ENCODE measurements at regions of chr14 and their contacts with region 1.

Region 1: GRCh38 chr14:74249433-74250375 is 10.5 kb downstream of the VSX2 start:
- DNase-seq: no peak
- ATAC-seq: no peak
- H3K4me3 ChIP-seq: no peak overlapping the region
- H3K4me3 Mint-ChIP-seq: no peak overlapping the region
- H3K27ac ChIP-seq: no peak overlapping the region
- H3K27ac Mint-ChIP-seq: no peak overlapping the region
- H3K4me1 ChIP-seq: peaks cover 9% of the 10 kb centered on the region
- H3K4me1 Mint-ChIP-seq: peaks cover 9% of the 10 kb centered on the region
- H3K27me3 ChIP-seq: peaks cover 26 to 39% of the 10 kb centered on the region in 2 experiments
- H3K27me3 Mint-ChIP-seq: peaks cover 57% of the 10 kb centered on the region
- CTCF ChIP-seq: no peak

Region 2: GRCh38 chr14:73452341-73453186 is 797.1 kb before region 1 on chr14:
- CTCF ChIA-PET with region 1: no interaction called
- POLR2A ChIA-PET with region 1: no interaction called
- intact Hi-C with region 1: no loop called
- DNase-seq: no peak
- ATAC-seq: no peak
- H3K4me3 ChIP-seq: no peak overlapping the region
- H3K4me3 Mint-ChIP-seq: peak overlapping the region; percentile 7
- H3K27ac ChIP-seq: no peak overlapping the region
- H3K27ac Mint-ChIP-seq: no peak overlapping the region
- H3K4me1 ChIP-seq: peaks cover 22% of the 10 kb centered on the region
- H3K4me1 Mint-ChIP-seq: peaks cover 42% of the 10 kb centered on the region
- H3K27me3 ChIP-seq: no peaks in the 10 kb centered on the region
- H3K27me3 Mint-ChIP-seq: no peaks in the 10 kb centered on the region
- CTCF ChIP-seq: no peak

Region 3: GRCh38 chr14:74109369-74109768 is 140.3 kb before region 1 on chr14:
- CTCF ChIA-PET with region 1: no interaction called
- POLR2A ChIA-PET with region 1: no interaction called
- intact Hi-C with region 1: loop called (anchors 1 kb)
- DNase-seq: no peak
- ATAC-seq: no peak
- H3K4me3 ChIP-seq: no peak overlapping the region
- H3K4me3 Mint-ChIP-seq: no peak overlapping the region
- H3K27ac ChIP-seq: no peak overlapping the region
- H3K27ac Mint-ChIP-seq: no peak overlapping the region
- H3K4me1 ChIP-seq: no peaks in the 10 kb centered on the region
- H3K4me1 Mint-ChIP-seq: no peaks in the 10 kb centered on the region
- H3K27me3 ChIP-seq: no peaks in the 10 kb centered on the region
- H3K27me3 Mint-ChIP-seq: no peaks in the 10 kb centered on the region
- CTCF ChIP-seq: no peak

Region 4: GRCh38 chr14:74217672-74218448 is 31.8 kb before region 1 on chr14:
- CTCF ChIA-PET with region 1: no interaction called
- POLR2A ChIA-PET with region 1: no interaction called
- intact Hi-C with region 1: loop called (anchors 1 to 2 kb)
- DNase-seq: peak; percentile 48 to 82 (median 68)
- ATAC-seq: peak; percentile 92
- H3K4me3 ChIP-seq: peak overlapping the region; percentile 22
- H3K4me3 Mint-ChIP-seq: peak overlapping the region; percentile 30
- H3K27ac ChIP-seq: no peak overlapping the region
- H3K27ac Mint-ChIP-seq: no peak overlapping the region
- H3K4me1 ChIP-seq: peaks cover 9% of the 10 kb centered on the region
- H3K4me1 Mint-ChIP-seq: no peaks in the 10 kb centered on the region
- H3K27me3 ChIP-seq: peaks cover 11 to 28% of the 10 kb centered on the region in 2 experiments
- H3K27me3 Mint-ChIP-seq: peaks cover 41% of the 10 kb centered on the region
- CTCF ChIP-seq: peak; percentile 77

Region 5: DNA sequence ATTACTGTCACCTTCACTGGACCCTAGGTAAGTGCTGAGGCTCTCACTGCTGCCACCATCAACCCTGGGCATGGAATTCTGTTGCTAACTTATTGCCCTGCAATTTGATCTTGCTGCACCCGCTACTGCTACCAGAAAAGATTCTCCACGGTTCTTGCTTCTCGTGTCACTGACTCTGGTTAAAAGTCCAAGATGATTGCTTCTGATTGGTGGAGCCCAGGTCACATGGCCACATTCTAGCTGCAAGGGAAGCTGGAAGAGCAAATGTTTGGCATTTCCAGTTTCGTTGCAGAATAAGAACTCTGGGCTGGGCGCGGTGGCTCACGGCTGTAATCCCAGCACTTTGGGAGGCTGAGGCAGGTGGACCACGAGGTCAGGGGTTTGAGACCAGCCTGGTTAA is 17.9 kb before region 1 on chr14:
- CTCF ChIA-PET with region 1: no interaction called
- POLR2A ChIA-PET with region 1: no interaction called
- intact Hi-C with region 1: no loop called
- DNase-seq: no peak
- ATAC-seq: no peak
- H3K4me3 ChIP-seq: no peak overlapping the region
- H3K4me3 Mint-ChIP-seq: no peak overlapping the region
- H3K27ac ChIP-seq: no peak overlapping the region
- H3K27ac Mint-ChIP-seq: no peak overlapping the region
- H3K4me1 ChIP-seq: no peaks in the 10 kb centered on the region
- H3K4me1 Mint-ChIP-seq: no peaks in the 10 kb centered on the region
- H3K27me3 ChIP-seq: peaks cover 4% of the 10 kb centered on the region in 2 experiments
- H3K27me3 Mint-ChIP-seq: peaks cover 72% of the 10 kb centered on the region
- CTCF ChIP-seq: no peak

Region 6: DNA sequence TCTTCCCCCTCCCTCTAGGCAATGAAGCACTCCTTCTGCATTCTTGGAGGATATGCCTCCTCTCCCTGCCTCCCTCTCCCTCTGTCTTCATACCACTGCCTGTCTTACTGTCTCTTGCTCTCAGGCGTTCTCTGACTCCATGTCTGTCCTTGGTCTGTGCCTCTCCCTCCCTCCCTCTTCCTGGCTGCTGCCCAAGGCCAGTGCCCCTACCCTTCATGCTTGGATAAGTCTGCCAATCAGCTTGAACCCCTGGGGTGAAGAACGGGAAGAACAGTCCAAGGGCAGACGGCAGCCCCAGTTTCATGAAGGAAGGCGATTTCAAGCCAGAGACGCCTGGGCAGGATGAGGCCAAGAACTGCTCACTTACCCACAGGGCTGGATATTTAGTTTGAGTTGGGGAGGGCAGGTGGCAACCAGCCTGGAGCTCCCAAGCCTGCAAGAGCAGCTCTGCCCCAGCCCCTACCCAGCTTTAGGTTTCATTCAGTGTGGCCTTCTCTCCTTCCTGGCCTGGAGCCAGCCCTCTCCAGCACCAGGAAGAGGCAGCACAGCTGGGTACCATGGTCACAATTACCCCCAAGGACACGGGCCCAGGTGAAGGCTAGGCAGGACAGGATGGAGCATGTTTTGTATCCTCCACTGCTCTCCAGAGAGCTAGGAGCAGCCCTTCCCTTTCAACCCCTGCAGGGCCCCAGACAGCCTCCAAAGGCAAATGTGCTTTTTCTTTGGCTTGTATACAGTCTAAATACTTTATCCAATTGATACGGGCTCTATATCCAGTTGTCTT is 398.2 kb after region 1 on chr14:
- CTCF ChIA-PET with region 1: no interaction called
- POLR2A ChIA-PET with region 1: no interaction called
- intact Hi-C with region 1: no loop called
- DNase-seq: no peak
- ATAC-seq: no peak
- H3K4me3 ChIP-seq: no peak overlapping the region
- H3K4me3 Mint-ChIP-seq: no peak overlapping the region
- H3K27ac ChIP-seq: no peak overlapping the region
- H3K27ac Mint-ChIP-seq: no peak overlapping the region
- H3K4me1 ChIP-seq: no peaks in the 10 kb centered on the region
- H3K4me1 Mint-ChIP-seq: no peaks in the 10 kb centered on the region
- H3K27me3 ChIP-seq: no peaks in the 10 kb centered on the region
- H3K27me3 Mint-ChIP-seq: no peaks in the 10 kb centered on the region
- CTCF ChIP-seq: no peak